ENCODE measurements at regions of chr11 and their contacts with region 1.

Region 1: DNA sequence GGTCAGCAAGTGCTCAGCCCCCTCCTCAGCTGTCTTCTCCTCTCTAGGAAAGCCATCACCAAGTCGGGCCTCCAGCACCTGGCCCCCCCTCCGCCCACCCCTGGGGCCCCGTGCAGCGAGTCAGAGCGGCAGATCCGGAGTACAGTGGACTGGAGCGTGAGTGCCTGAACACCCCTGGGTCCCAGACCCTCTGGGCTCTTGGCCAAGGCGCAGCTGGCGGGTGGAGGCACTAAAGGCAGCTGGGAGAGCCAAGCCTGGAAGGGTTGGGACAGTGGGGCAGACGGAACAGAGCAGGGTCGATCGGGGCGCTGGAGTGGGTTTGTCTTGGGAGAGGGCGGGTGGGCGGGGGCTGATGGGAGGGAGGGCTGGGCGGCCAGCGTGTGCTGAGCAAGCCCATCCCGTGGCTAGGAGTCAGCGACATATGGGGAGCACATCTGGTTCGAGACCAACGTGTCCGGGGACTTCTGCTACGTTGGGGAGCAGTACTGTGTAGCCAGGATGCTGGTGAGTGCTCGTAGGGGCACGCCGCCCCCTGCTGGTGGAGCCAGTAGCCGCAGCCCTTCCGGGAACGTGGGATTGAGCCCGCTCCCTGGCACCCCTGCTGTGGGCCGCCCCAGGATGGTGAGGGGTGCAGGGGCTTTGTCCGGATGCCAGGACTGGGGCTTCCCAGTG is 14.1 kb upstream of the MDK start:
- DNase-seq: no peak
- H3K4me3 ChIP-seq: no peak overlapping the region
- H3K27ac ChIP-seq: no peak overlapping the region
- H3K4me1 ChIP-seq: peaks cover 26% of the 10 kb centered on the region
- H3K27me3 ChIP-seq: no peaks in the 10 kb centered on the region
- CTCF ChIP-seq: peak; percentile 58 to 78

Region 2: GRCh38 chr11:46247664-46248063 is 119.7 kb before region 1 on chr11:
- CTCF ChIA-PET with region 1: no interaction called
- dilution Hi-C with region 1: no loop called
- in situ Hi-C with region 1: no loop called
- intact Hi-C with region 1: loop called (anchors 2 kb)
- DNase-seq: peak; percentile 66
- H3K4me3 ChIP-seq: no peak overlapping the region
- H3K27ac ChIP-seq: no peak overlapping the region
- H3K4me1 ChIP-seq: peaks cover 26% of the 10 kb centered on the region
- H3K27me3 ChIP-seq: no peaks in the 10 kb centered on the region
- CTCF ChIP-seq: peak; percentile 54 to 70

Region 3: DNA sequence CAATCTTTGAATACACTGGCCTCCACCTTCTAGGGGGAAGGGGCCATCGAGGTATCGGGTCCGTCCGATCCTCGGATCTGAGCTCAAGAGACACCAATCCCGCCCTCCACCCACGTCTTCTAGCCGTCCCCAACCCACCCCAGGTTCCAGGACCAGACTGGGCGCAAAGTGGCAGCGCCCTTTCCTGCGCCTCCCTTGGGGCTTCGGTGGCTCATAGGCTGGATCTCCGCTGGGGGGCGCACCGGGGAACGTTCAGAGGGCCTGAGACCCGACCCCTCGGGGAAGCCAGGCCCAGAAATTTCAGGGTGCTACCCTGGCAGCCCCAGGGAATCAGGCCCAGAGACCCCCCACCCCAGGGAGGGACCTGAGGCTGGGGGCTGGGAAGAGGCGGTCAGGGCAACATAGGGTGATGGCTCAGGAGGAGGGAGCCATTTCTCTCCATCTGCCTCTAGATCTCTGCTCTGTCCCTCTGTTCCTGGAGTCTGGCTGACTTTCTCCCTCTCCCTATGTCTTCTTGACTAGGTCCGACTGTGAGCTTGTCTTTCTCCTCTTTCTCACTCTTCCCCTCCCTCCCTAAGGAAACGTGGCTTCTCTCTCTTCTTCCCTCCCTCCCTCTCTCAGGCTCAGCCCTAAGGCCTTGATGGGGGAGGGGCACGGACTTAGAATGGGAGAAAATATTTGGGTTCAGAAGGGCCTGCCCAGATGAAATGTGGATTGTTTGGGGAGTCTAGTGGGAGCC is 88.8 kb before region 1 on chr11:
- CTCF ChIA-PET with region 1: no interaction called
- dilution Hi-C with region 1: no loop called
- in situ Hi-C with region 1: no loop called
- intact Hi-C with region 1: no loop called
- DNase-seq: no peak
- H3K4me3 ChIP-seq: no peak overlapping the region
- H3K27ac ChIP-seq: no peak overlapping the region
- H3K4me1 ChIP-seq: peaks cover 2% of the 10 kb centered on the region
- H3K27me3 ChIP-seq: peaks cover 12% of the 10 kb centered on the region
- CTCF ChIP-seq: peak in 1 of 2 donors; percentile 21

Region 4: DNA sequence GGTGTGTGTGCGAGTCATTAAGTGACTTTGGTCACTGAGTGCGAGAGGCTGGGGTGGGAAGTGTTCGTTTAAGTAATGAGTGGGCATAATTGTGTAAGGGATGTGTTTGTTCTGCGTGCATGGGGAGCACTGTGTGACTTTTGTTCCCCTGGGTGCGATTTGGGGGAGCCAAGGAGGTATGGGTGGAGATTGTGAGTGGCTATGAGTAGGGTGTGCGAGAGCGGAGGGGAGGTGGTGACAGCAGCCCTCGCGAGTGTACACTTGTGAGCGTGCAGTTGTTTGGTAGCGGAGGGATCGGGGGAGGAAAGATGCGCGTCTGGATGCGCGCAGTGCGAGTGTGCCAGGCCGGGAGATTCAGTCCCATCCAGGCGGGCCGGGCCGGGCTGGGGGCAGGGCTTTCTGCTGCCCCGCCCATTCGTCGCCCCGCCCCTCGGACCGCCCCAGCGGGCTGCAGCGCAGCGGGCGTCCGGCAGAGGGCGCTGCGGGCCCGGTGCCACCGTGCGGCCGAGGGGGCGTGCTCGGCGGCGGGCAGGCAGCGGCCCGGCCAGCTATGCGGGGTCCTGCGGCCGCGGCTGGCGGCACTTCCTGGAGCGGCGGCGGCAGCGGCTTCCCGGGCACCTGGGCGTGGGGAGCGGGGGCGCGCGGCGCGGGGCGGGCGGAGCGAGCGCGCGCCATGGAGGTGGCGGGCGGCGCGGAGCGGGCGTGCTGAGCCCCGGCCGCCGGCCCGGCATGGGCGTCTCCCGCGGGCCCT is 20.3 kb before region 1 on chr11 and contains the start of gene DGKZ:
- CTCF ChIA-PET with region 1: interaction called, 12 read pairs
- dilution Hi-C with region 1: no loop called
- in situ Hi-C with region 1: no loop called
- intact Hi-C with region 1: loop called (anchors 1 kb)
- DNase-seq: peak; percentile 81
- H3K4me3 ChIP-seq: peak within 1 kb of the TSS; percentile 73 to 93 (median 92)
- H3K27ac ChIP-seq: peak within 1 kb of the TSS; percentile 44
- H3K4me1 ChIP-seq: peaks cover 49% of the 10 kb centered on the region
- H3K27me3 ChIP-seq: no peaks in the 10 kb centered on the region
- CTCF ChIP-seq: peak; percentile 52 to 62
- total RNA-seq, gene DGKZ: 80.7 to 83.6 TPM

Region 5: GRCh38 chr11:46352063-46352841 is 15.1 kb before region 1 on chr11:
- CTCF ChIA-PET with region 1: interaction called, 12 read pairs
- dilution Hi-C with region 1: no loop called
- in situ Hi-C with region 1: no loop called
- intact Hi-C with region 1: loop called (anchors 1 kb)
- DNase-seq: peak; percentile 87
- H3K4me3 ChIP-seq: peak overlapping the region; percentile 25 to 55 (median 38)
- H3K27ac ChIP-seq: peak overlapping the region; percentile 31
- H3K4me1 ChIP-seq: peaks cover 61% of the 10 kb centered on the region
- H3K27me3 ChIP-seq: no peaks in the 10 kb centered on the region
- CTCF ChIP-seq: peak; percentile 96 to 97

Region 6: GRCh38 chr11:46414466-46414796 is 47.1 kb after region 1 on chr11:
- CTCF ChIA-PET with region 1: no interaction called
- dilution Hi-C with region 1: no loop called
- in situ Hi-C with region 1: no loop called
- intact Hi-C with region 1: no loop called
- DNase-seq: no peak
- H3K4me3 ChIP-seq: no peak overlapping the region
- H3K27ac ChIP-seq: no peak overlapping the region
- H3K4me1 ChIP-seq: no peaks in the 10 kb centered on the region
- H3K27me3 ChIP-seq: no peaks in the 10 kb centered on the region
- CTCF ChIP-seq: no peak

Region 7: DNA sequence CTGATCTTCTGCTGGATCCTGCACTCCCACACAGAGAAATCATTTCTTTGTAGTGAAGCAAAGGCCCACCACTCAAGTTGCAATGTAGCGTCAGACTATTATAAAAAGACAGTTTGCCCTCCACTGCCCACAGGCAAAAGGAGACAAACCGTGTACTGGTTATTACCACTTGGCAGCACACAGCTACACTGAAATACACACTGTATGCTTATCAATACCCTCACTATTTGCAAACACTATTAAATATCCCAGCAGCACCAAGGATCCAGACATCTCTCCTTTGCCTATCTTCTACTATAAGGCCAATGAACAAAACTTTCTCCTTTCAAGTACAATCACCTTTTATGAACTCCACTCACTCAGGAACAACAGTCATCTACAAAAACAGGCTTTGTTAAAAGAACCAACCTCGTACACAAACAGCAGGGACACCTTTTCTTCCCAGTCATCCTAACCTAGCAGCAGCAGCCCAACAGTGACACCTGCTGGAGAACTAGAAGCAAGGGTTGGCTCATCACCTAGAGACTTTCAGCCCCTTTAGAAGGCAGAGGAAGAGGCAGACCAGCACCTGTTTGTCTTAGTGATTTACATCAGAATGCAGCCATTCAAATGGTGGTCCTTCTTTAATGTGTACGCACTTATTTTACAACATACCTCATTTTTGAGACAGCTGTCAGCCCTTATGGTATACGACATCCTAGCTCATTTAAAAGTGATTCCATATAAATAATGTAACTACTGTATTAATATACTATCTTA is 170.3 kb after region 1 on chr11:
- CTCF ChIA-PET with region 1: no interaction called
- dilution Hi-C with region 1: no loop called
- in situ Hi-C with region 1: no loop called
- intact Hi-C with region 1: loop called (anchors 1 kb)
- DNase-seq: peak; percentile 76
- H3K4me3 ChIP-seq: no peak overlapping the region
- H3K27ac ChIP-seq: peak overlapping the region; percentile 19
- H3K4me1 ChIP-seq: peaks cover 5% of the 10 kb centered on the region
- H3K27me3 ChIP-seq: no peaks in the 10 kb centered on the region
- CTCF ChIP-seq: peak; percentile 98 to 99